ENCODE measurements at regions of chr4 and their contacts with region 1.

Region 1: DNA sequence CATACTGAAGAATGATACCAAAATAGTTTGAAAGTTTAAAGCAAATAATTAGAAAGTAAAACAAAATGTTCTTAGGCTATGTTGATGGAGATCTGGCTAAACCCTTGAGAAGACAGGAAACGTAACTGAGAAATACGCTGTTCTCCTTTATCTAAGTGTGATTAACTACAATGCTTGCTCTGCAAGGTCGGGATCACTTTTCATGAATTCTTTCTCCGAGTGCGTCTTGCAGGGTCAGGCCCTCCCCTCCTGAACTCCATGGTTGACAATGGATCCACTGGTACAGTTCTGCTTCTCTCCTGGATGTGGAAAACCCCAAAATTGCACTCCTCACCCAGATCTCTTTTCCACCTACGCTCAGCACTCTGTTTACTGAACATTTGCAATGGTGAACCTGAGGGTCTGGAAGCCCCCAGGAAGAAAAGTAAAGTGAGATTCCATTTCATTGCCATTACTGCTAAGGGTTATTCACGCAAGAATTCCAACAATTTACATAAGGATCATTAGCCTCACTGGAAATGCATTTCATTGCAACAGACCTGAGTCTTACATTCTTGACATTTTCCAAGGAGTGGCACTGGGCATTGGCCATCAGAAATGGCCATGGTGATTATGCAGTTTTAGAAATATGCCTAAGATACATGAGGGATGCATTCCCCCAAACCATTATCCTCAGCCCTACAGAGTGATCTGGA is 24.6 kb upstream of the WWC2 start:
- ATAC-seq: peak in 1 of 8 experiments; percentile 73
- H3K4me3 ChIP-seq: no peak overlapping the region
- H3K27ac ChIP-seq: no peak overlapping the region
- H3K4me1 ChIP-seq: no peaks in the 10 kb centered on the region

Region 2: GRCh38 chr4:182938205-182938645 is 136.2 kb before region 1 on chr4:
- in situ Hi-C with region 1: loop called in 2 of 9 experiments (anchors 25 kb)
- ATAC-seq: peak in 4 of 8 experiments; percentile 35 to 100 (median 97)
- H3K4me3 ChIP-seq: no peak overlapping the region
- H3K27ac ChIP-seq: no peak overlapping the region
- H3K4me1 ChIP-seq: no peaks in the 10 kb centered on the region

Region 3: DNA sequence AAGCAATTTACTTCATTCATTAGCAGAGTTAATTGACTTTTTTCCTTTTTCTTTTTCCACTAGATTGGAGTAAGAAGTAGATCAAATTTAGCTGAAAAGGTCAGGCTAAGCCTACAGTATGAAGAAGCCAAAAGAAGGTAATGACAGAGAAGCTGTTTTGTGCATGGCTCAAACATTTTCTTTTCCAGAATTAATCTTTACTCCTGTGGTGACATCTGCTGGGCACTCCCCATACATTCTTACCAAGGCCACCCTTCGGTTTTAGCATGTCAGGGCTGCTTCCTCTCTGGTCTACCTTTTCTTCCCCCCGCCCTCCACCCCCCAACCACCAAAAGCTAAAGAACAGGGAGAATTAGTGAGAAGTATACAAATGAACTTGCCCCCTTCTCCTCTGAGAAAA is 175.4 kb after region 1 on chr4:
- in situ Hi-C with region 1: loop called in 6 of 9 experiments (anchors 5 to 25 kb)
- ATAC-seq: peak in 5 of 8 experiments; percentile 36 to 83 (median 67)
- H3K4me3 ChIP-seq: no peak overlapping the region
- H3K27ac ChIP-seq: no peak overlapping the region
- H3K4me1 ChIP-seq: no peaks in the 10 kb centered on the region

Region 4: DNA sequence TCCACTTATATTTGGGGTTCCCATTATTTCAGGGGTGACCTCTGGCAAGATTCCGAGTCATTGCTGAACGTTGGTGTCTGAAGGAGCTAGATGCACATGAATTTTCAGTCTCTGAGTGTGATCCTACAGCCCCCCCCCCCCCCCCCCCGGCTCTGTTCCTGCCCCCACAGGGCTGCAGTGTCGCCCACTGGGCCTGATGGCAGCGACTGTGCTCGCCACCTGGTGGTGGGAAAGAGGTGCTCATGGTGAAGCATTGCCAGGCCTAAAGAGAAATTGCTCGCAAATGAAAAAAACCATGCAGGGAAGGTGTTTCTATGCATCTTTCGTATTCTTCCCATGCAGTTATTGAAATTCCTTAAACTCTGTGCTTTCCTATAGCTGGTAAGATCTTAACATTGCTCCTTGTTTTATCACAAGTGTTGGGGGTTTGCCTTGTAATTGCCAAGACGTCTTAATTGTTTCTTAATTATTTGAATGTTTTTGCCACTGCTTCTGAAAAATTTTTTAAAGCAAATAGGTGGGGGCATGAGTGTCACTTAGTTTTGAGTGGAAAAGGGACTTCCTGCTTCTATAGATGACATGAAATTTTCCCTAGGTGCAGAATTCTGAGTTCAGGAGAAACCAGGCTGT is 182.4 kb after region 1 on chr4:
- in situ Hi-C with region 1: loop called in 3 of 9 experiments (anchors 10 to 25 kb)
- ATAC-seq: peak; percentile 38 to 92 (median 68)
- H3K4me3 ChIP-seq: no peak overlapping the region
- H3K27ac ChIP-seq: no peak overlapping the region
- H3K4me1 ChIP-seq: no peaks in the 10 kb centered on the region

Region 5: GRCh38 chr4:183407128-183407585 is 332.7 kb after region 1 on chr4:
- in situ Hi-C with region 1: loop called in 1 of 9 experiments (anchors 25 kb)
- ATAC-seq: peak; percentile 78 to 97 (median 92)
- H3K4me3 ChIP-seq: peak overlapping the region; percentile 28 to 59 (median 38)
- H3K27ac ChIP-seq: peak overlapping the region; percentile 61 to 88
- H3K4me1 ChIP-seq: peaks cover 10 to 31% of the 10 kb centered on the region in 2 donors